Sigmoid colon (tissue), 7 donors: ENCODE measurements at regions of chr2 and their contacts with region 1.

Region 1: DNA sequence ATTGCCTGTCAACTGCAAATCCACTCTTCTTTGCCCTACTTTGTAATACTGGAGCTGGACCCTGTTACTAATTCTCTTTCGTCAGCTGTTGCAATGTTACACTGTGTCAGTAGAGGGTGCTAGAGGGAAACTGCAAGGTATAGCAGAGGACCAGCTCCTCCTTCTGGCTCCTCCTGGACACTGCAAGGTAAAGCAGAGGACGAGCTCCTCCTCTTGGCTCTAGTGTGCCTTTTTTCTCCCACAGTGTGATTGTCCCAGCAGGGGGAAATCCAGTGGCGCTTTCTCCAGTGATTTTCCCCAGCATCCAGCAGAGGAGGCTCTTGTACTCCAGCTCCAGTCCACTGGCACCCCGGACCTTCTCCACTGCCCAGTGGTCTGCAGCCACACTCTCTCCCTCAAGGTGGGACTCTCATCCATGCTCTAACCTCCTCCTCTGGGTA is 95.6 kb downstream of the CAPN13 start:
- DNase-seq: peak; percentile 86
- H3K4me3 ChIP-seq: no peak overlapping the region
- H3K27ac ChIP-seq: no peak overlapping the region
- H3K4me1 ChIP-seq: peaks cover 0 to 6% (median 3%) of the 10 kb centered on the region in 4 donors
- H3K27me3 ChIP-seq: no peaks in the 10 kb centered on the region
- CTCF ChIP-seq: peak; percentile 90 to 99 (median 99)
- EP300 ChIP-seq: no peak
- POLR2A ChIP-seq: no peak

Region 2: GRCh38 chr2:30098266-30099005 is 613.2 kb before region 1 on chr2:
- intact Hi-C with region 1: loop called (anchors 5 kb)
- DNase-seq: no peak
- H3K4me3 ChIP-seq: no peak overlapping the region
- H3K27ac ChIP-seq: no peak overlapping the region
- H3K4me1 ChIP-seq: no peaks in the 10 kb centered on the region
- H3K27me3 ChIP-seq: peaks cover 0 to 5% (median 0%) of the 10 kb centered on the region in 3 donors
- CTCF ChIP-seq: no peak
- EP300 ChIP-seq: no peak
- POLR2A ChIP-seq: no peak

Region 3: GRCh38 chr2:30165050-30165520 is 546.6 kb before region 1 on chr2:
- intact Hi-C with region 1: loop called (anchors 2 kb)
- DNase-seq: no peak
- H3K4me3 ChIP-seq: no peak overlapping the region
- H3K27ac ChIP-seq: no peak overlapping the region
- H3K4me1 ChIP-seq: peaks cover 0 to 27% (median 11%) of the 10 kb centered on the region in 4 donors
- H3K27me3 ChIP-seq: no peaks in the 10 kb centered on the region
- CTCF ChIP-seq: peak; percentile 78 to 84 (median 80)
- EP300 ChIP-seq: no peak
- POLR2A ChIP-seq: no peak

Region 4: DNA sequence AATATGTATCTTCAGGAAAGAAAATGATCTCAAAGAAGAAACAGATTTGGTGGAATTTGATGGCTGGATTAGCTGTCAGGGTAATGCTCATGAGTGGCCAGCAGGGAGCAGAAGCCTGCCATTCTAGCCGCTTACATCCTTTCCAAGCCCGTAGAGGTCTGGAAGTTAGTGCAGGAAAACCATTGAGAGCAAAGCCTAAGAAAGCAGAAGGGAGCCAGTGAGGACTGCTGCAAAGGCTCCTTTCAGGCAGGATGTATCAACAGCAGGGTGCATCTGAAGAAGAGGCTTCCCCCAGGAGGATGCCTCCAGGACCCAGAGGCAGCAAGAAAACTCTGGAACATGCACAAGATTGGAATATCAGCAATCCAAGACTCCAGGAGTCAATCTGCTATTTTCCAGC is 503.2 kb before region 1 on chr2:
- intact Hi-C with region 1: loop called (anchors 1 kb)
- DNase-seq: peak; percentile 86
- H3K4me3 ChIP-seq: no peak overlapping the region
- H3K27ac ChIP-seq: peak overlapping the region in 1 of 4 donors; percentile 18
- H3K4me1 ChIP-seq: peaks cover 0 to 7% (median 4%) of the 10 kb centered on the region in 4 donors
- H3K27me3 ChIP-seq: no peaks in the 10 kb centered on the region
- CTCF ChIP-seq: peak; percentile 82 to 95 (median 89)
- EP300 ChIP-seq: no peak
- POLR2A ChIP-seq: no peak

Region 5: GRCh38 chr2:30300456-30301221 is 411.0 kb before region 1 on chr2:
- intact Hi-C with region 1: loop called (anchors 10 kb)
- DNase-seq: no peak
- H3K4me3 ChIP-seq: no peak overlapping the region
- H3K27ac ChIP-seq: peak overlapping the region; percentile 73 to 88 (median 82)
- H3K4me1 ChIP-seq: peaks cover 0 to 27% (median 24%) of the 10 kb centered on the region in 4 donors
- H3K27me3 ChIP-seq: no peaks in the 10 kb centered on the region
- CTCF ChIP-seq: no peak
- EP300 ChIP-seq: peak in 3 of 4 donors; percentile 56 to 63 (median 61)
- POLR2A ChIP-seq: no peak

Region 6: DNA sequence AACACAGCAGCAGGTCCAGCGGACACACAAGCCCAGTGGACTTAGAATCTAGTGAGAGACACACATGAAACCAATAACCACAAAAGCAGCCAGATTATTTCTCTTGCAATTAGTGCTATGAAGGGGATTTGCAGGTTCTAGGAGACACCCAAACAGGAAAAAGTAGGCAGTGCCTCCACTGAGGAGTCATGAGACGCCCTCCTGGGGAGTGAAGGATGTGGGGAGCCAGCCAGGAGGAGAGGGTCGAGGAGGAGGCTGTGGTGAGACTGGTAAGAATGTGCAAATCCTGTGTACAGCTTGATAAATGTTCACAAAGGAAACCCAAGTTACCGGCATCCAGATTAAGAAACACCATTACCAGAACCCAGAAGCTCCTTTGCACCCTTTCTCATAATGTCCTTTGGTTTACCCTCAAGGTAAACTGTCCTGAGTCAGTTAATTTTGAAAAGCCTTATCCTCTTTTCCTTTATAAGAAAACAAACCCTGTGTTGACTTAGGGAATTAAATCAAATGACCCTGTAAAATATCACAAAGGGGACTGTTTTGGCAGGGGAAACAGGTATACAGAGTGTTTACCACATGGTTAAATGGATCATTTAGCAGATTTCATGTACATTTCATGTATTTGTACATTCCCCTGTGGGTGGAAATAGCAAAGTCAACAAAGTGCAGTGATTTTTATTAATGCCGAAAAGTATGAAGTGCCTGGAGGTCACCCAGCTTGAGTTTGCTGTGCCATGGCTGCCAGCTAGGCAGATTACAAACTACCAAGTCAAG is 98.5 kb after region 1 on chr2:
- intact Hi-C with region 1: no loop called
- DNase-seq: no peak
- H3K4me3 ChIP-seq: no peak overlapping the region
- H3K27ac ChIP-seq: no peak overlapping the region
- H3K4me1 ChIP-seq: peaks cover 0 to 6% (median 0%) of the 10 kb centered on the region in 4 donors
- H3K27me3 ChIP-seq: no peaks in the 10 kb centered on the region
- CTCF ChIP-seq: no peak
- EP300 ChIP-seq: no peak
- POLR2A ChIP-seq: no peak

Region 7: DNA sequence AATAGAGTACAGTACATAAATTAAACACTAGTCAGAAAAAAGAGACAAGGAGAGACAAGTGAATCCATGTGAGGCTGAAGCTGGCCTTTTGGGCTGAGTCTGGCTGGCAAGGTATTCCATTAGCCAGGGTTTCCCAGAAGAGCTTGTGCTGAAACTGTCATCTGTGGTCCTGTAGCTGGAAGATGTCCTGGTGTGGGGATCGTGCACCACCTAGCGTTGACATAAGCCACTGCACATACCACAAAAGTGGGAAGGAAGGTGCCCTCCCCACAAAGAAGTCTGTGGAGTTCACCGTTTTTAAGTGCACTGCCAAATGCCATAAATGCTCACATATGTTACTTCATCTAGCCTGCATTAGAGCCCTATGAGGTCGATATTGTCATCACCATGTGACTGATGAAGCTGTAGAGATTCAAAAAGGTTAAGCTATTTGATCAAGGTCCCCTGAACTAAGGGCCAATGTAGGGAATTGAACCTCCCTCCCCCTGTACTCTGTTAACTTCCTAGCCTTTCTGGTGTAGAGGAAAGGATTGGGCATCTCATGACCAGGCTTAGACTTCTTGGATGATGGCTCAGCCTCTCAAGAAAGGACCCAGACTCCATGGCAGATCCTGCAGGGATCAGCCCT is 458.5 kb after region 1 on chr2:
- intact Hi-C with region 1: loop called (anchors 2 kb)
- DNase-seq: no peak
- H3K4me3 ChIP-seq: no peak overlapping the region
- H3K27ac ChIP-seq: no peak overlapping the region
- H3K4me1 ChIP-seq: no peaks in the 10 kb centered on the region
- H3K27me3 ChIP-seq: peaks cover 0 to under 1% (median 0%) of the 10 kb centered on the region in 3 donors
- CTCF ChIP-seq: peak; percentile 29 to 82 (median 81)
- EP300 ChIP-seq: no peak
- POLR2A ChIP-seq: no peak

Region 8: DNA sequence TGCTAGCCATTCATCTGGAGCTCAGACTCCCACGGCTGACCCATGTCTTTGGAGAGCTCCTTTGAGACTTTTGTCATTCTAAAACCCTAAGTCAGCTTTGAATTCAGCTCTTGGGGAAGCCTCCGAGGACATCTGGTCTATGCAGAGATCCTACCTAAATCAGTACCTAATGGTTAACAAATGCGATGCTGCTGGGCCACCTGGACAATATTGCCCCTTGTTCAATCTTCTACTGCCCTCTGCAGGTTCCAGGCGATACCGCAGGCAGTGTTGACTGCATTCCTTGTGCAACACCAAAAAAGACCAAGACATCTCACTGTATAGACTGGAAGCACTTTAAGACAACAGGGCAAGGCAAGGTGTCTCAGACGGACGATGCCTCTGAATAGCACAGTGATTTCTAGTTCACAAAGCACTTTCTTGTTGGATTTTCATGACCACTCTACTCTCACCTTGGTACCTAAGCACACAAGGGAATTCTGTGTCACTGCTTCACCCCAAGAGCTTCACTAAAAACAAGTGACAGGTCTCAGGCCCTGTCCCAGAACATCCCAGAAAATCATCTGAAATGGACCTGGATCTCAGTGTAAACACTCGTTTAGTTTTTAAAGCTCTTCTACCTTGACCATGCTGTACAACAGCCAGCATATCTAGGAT is 622.0 kb after region 1 on chr2:
- intact Hi-C with region 1: loop called (anchors 1 kb)
- DNase-seq: peak; percentile 79
- H3K4me3 ChIP-seq: no peak overlapping the region
- H3K27ac ChIP-seq: no peak overlapping the region
- H3K4me1 ChIP-seq: peaks cover 0 to 8% (median 0%) of the 10 kb centered on the region in 4 donors
- H3K27me3 ChIP-seq: peaks cover 0 to 5% (median 0%) of the 10 kb centered on the region in 3 donors
- CTCF ChIP-seq: peak; percentile 50 to 93 (median 86)
- EP300 ChIP-seq: no peak
- POLR2A ChIP-seq: no peak